Heart left ventricle (tissue), 16 donors: ENCODE measurements at regions of chr2 and their contacts with region 1.

Region 1: DNA sequence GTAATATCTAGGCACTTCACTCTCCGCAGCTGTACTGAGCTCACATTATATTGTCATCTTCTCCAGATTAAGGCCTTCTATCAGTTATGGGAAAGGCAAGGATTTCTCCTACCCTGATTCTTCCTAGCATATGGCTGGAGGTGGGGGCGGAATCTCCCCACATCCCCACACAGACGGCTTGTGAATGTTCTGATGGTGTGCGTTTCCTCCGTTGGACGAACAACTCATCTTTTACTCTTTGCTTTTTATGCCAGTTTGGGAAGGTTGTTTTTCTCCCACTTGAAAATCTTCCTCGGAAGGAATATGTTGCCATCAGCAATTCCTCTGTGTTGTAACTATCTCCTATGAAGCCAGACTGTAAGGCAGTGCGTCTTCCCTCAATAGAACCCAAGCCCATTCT is 24.3 kb downstream of the KLHL29 start:
- DNase-seq: no peak
- ATAC-seq: no peak
- H3K4me3 ChIP-seq: no peak overlapping the region
- H3K27ac ChIP-seq: no peak overlapping the region
- H3K4me1 ChIP-seq: peaks cover 0 to 9% (median 3%) of the 10 kb centered on the region in 12 donors
- H3K27me3 ChIP-seq: no peaks in the 10 kb centered on the region
- CTCF ChIP-seq: no peak
- POLR2A ChIP-seq: no peak

Region 2: GRCh38 chr2:23602116-23602515 is 192.9 kb after region 1 on chr2:
- intact Hi-C with region 1: loop called in 1 of 10 experiments (anchors 5 kb)
- DNase-seq: peak in 1 of 5 donors; percentile 52
- ATAC-seq: peak; percentile 19 to 39 (median 26)
- H3K4me3 ChIP-seq: no peak overlapping the region
- H3K27ac ChIP-seq: peak overlapping the region in 1 of 12 donors; percentile 88
- H3K4me1 ChIP-seq: no peaks in the 10 kb centered on the region
- H3K27me3 ChIP-seq: no peaks in the 10 kb centered on the region
- CTCF ChIP-seq: no peak
- POLR2A ChIP-seq: no peak